Activated CD8-positive, alpha-beta T cell treated with anti-CD3 and anti-CD28 coated beads for 36 hours (primary cell): ENCODE measurements at regions of chr1 and their contacts with region 1.

Region 1: GRCh38 chr1:50332941-50333594 is 90.2 kb downstream of the DMRTA2 start:
- DNase-seq: peak; percentile 37
- ATAC-seq: peak; percentile 56
- H3K4me3 Mint-ChIP-seq: peak overlapping the region; percentile 32
- H3K27ac Mint-ChIP-seq: no peak overlapping the region
- H3K4me1 Mint-ChIP-seq: peaks cover 9% of the 10 kb centered on the region
- H3K27me3 Mint-ChIP-seq: peaks cover 36% of the 10 kb centered on the region
- CTCF ChIP-seq: peak; percentile 84

Region 2: GRCh38 chr1:50183378-50184133 is 149.5 kb before region 1 on chr1:
- CTCF ChIA-PET with region 1: no interaction called
- POLR2A ChIA-PET with region 1: no interaction called
- intact Hi-C with region 1: no loop called
- DNase-seq: no peak
- ATAC-seq: no peak
- H3K4me3 Mint-ChIP-seq: no peak overlapping the region
- H3K27ac Mint-ChIP-seq: no peak overlapping the region
- H3K4me1 Mint-ChIP-seq: no peaks in the 10 kb centered on the region
- H3K27me3 Mint-ChIP-seq: no peaks in the 10 kb centered on the region
- CTCF ChIP-seq: no peak

Region 3: DNA sequence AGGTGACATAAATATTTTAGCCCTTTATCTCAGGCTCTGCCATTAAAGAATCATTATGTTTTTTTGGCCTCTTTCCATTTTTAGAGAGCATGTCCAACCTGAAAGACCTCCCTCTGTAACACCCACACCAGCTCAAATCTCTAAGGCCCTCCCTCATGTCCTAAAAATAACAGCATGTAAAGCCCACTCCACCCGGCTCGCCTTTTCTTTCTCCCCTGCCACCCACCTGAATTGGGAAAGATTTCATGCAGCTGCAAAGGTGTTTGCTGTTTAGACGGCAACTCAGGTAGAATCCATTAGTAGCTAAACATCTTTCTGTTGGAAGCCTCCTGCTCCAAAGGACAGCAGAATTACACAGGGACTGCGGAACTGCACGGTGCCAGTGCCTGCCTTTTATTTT is 10.3 kb after region 1 on chr1:
- CTCF ChIA-PET with region 1: interaction called, 26 read pairs
- POLR2A ChIA-PET with region 1: no interaction called
- intact Hi-C with region 1: no loop called
- DNase-seq: no peak
- ATAC-seq: no peak
- H3K4me3 Mint-ChIP-seq: no peak overlapping the region
- H3K27ac Mint-ChIP-seq: no peak overlapping the region
- H3K4me1 Mint-ChIP-seq: peaks cover 2% of the 10 kb centered on the region
- H3K27me3 Mint-ChIP-seq: peaks cover 24% of the 10 kb centered on the region
- CTCF ChIP-seq: no peak

Region 4: GRCh38 chr1:50348449-50349241 is 15.6 kb after region 1 on chr1:
- CTCF ChIA-PET with region 1: interaction called, 26 read pairs
- POLR2A ChIA-PET with region 1: no interaction called
- intact Hi-C with region 1: no loop called
- DNase-seq: peak; percentile 63
- ATAC-seq: peak; percentile 77
- H3K4me3 Mint-ChIP-seq: no peak overlapping the region
- H3K27ac Mint-ChIP-seq: no peak overlapping the region
- H3K4me1 Mint-ChIP-seq: peaks cover 2% of the 10 kb centered on the region
- H3K27me3 Mint-ChIP-seq: peaks cover 20% of the 10 kb centered on the region
- CTCF ChIP-seq: peak; percentile 79